Heart left ventricle (tissue), 16 donors: ENCODE measurements at regions of chr6 and their contacts with region 1.

Region 1: DNA sequence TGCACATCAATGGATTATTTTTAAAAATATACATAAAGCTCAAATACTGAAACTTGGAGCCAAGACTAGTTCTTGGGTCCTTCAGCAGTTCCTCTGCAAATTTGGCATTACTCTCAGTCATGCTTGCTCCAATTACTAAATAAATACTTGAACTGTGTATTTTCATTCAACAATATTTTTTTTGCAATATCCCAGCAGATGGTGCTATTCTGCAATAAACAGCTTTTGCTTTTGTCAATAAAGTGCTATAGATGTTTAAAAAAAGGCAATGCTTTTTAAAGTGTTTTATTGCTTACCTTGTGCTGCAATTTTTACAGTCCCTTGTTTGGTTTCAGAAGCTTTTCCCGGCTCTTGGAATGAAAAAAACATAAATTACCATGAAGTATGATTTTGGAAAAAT is 243.4 kb downstream of the TRDN start:
- DNase-seq: no peak
- ATAC-seq: no peak
- H3K4me3 ChIP-seq: no peak overlapping the region
- H3K27ac ChIP-seq: no peak overlapping the region
- H3K4me1 ChIP-seq: no peaks in the 10 kb centered on the region
- H3K27me3 ChIP-seq: no peaks in the 10 kb centered on the region
- CTCF ChIP-seq: peak in 11 of 12 donors; percentile 12 to 54 (median 26)
- POLR2A ChIP-seq: no peak

Region 2: DNA sequence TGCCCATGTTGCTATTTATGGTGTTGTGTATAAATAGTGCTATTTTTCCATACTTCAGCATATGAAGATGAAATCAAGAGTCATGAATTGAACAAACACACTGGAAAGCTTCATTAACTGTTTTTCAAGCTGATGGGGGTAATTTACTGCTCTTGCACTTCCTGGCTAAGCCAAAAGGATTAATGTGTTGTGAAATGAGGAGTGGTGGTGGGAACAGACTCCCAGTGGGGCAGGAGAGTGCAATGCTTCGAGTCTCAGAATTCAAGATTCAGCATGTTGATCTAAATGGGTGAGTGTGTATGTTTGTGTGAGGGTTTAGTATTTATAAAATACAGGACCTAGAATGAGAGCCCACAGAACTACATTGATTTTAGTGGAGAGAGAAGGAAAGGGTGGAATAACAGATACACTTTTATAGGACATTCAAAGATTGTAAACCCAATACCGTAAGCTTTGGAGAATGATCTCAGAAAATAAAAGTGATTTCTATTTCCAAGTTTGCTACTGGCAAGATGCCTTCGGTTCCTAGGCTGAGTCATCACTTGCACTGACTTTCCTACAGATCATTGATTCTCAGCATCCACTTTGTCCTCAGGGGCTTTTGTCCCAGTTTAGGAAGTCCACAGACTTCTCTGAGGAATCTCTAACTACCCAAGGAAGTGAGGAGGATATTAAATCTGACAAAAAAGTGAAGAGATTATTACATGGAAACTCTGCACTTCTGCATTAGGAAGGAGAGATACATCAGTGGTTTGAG is 60.1 kb before region 1 on chr6:
- intact Hi-C with region 1: no loop called
- DNase-seq: no peak
- ATAC-seq: no peak
- H3K4me3 ChIP-seq: no peak overlapping the region
- H3K27ac ChIP-seq: no peak overlapping the region
- H3K4me1 ChIP-seq: no peaks in the 10 kb centered on the region
- H3K27me3 ChIP-seq: no peaks in the 10 kb centered on the region
- CTCF ChIP-seq: no peak
- POLR2A ChIP-seq: no peak

Region 3: GRCh38 chr6:124819346-124819745 is 1426.0 kb after region 1 on chr6:
- intact Hi-C with region 1: loop called in 1 of 10 experiments (anchors 10 kb)
- DNase-seq: no peak
- ATAC-seq: no peak
- H3K4me3 ChIP-seq: no peak overlapping the region
- H3K27ac ChIP-seq: no peak overlapping the region
- H3K4me1 ChIP-seq: peaks cover 0 to 8% (median 0%) of the 10 kb centered on the region in 12 donors
- H3K27me3 ChIP-seq: no peaks in the 10 kb centered on the region
- CTCF ChIP-seq: no peak
- POLR2A ChIP-seq: no peak

Region 4: GRCh38 chr6:124854338-124854922 is 1461.1 kb after region 1 on chr6:
- intact Hi-C with region 1: loop called in 2 of 10 experiments (anchors 5 to 10 kb)
- DNase-seq: no peak
- ATAC-seq: no peak
- H3K4me3 ChIP-seq: no peak overlapping the region
- H3K27ac ChIP-seq: no peak overlapping the region
- H3K4me1 ChIP-seq: no peaks in the 10 kb centered on the region
- H3K27me3 ChIP-seq: no peaks in the 10 kb centered on the region
- CTCF ChIP-seq: peak in 7 of 12 donors; percentile 10 to 43 (median 25)
- POLR2A ChIP-seq: no peak